ENCODE measurements at regions of chr1 and their contacts with region 1.

Region 1: DNA sequence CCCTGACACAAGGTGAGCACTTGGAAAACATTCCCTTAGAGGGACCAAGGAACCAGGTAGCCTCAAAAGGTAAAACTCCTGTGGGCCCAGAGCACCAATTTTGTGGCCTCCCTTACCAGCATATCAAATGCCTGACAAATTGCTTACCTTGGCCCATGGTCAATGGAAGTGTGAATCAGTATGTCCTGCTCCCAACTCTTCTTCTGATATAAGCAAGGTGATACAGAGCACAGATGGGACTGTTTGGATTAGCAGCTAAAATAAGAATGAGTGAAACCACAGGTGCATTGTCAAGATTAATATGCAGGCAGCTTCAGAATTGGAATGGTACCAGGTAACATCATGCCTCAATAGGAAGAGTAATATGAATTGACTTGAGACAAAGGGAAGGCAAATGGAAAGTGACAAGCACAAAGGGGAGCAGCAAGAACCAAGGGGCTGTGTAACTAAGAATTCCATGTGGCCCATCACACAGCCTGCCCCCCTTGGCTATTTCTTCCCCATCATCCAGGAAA is 156.8 kb upstream of the KCND3 start:
- DNase-seq: no peak
- H3K4me3 ChIP-seq: no peak overlapping the region
- H3K27ac ChIP-seq: no peak overlapping the region
- H3K4me1 ChIP-seq: no peaks in the 10 kb centered on the region
- H3K27me3 ChIP-seq: no peaks in the 10 kb centered on the region
- CTCF ChIP-seq: no peak

Region 2: GRCh38 chr1:112165375-112165774 is 19.1 kb after region 1 on chr1:
- intact Hi-C with region 1: loop called (anchors 2 kb)
- DNase-seq: no peak
- H3K4me3 ChIP-seq: no peak overlapping the region
- H3K27ac ChIP-seq: no peak overlapping the region
- H3K4me1 ChIP-seq: no peaks in the 10 kb centered on the region
- H3K27me3 ChIP-seq: no peaks in the 10 kb centered on the region
- CTCF ChIP-seq: no peak

Measured in colonic mucosa (tissue), 4 donors.